Motor neuron (in vitro differentiated cells): ENCODE measurements at regions of chr11 and their contacts with region 1.

Region 1: GRCh38 chr11:33687733-33688479 is 12.7 kb downstream of the C11orf91 start:
- ATAC-seq: peak in 6 of 8 experiments; percentile 39 to 49 (median 44)
- H3K4me3 ChIP-seq: no peak overlapping the region
- H3K27ac ChIP-seq: no peak overlapping the region
- H3K4me1 ChIP-seq: peaks cover 8 to 16% of the 10 kb centered on the region in 2 donors

Region 2: GRCh38 chr11:33362051-33362910 is 325.6 kb before region 1 on chr11:
- in situ Hi-C with region 1: loop called in 8 of 9 experiments (anchors 5 to 25 kb)
- ATAC-seq: peak in 4 of 8 experiments; percentile 34 to 75 (median 66)
- H3K4me3 ChIP-seq: no peak overlapping the region
- H3K27ac ChIP-seq: no peak overlapping the region
- H3K4me1 ChIP-seq: no peaks in the 10 kb centered on the region

Region 3: GRCh38 chr11:33976495-33977199 is 288.7 kb after region 1 on chr11:
- in situ Hi-C with region 1: no loop called
- ATAC-seq: no peak
- H3K4me3 ChIP-seq: no peak overlapping the region
- H3K27ac ChIP-seq: no peak overlapping the region
- H3K4me1 ChIP-seq: no peaks in the 10 kb centered on the region